ENCODE measurements at regions of chr4 and their contacts with region 1.

Region 1: GRCh38 chr4:89226665-89227574 is 80.7 kb downstream of the GPRIN3 start:
- DNase-seq: peak; percentile 75
- H3K4me3 Mint-ChIP-seq: no peak overlapping the region
- H3K27ac Mint-ChIP-seq: no peak overlapping the region
- H3K4me1 Mint-ChIP-seq: peaks cover 21% of the 10 kb centered on the region
- H3K27me3 Mint-ChIP-seq: no peaks in the 10 kb centered on the region
- CTCF ChIP-seq: peak; percentile 63

Region 2: DNA sequence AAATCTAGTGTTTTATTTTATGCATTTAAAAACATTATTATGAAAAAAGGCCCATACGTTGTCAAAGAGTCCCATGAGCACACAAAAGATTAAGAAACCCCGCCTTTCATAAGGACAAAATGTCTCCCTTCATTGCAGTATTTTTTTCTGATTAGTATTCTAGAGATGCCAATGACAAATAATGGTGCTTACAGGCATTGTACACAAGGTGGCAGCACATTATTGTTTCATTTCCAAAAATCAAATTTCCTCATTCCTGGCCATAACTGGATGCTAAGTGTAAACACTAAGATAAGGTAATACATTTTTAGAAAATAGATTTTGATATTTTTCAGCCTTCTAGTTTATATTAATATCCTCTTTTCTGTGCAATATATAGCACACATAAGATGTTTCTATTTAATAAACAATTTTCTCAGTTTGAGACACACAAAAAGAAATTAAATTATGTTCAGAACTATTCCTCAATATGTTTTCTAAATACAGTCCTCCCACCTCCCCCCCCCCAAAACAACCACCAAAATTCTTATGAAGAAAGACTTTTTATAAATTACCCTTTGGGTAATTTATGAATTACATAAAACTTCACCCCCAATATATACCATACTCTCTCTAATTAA is 67.9 kb before region 1 on chr4:
- CTCF ChIA-PET with region 1: no interaction called
- intact Hi-C with region 1: loop called (anchors 2 kb)
- DNase-seq: peak; percentile 20
- H3K4me3 Mint-ChIP-seq: no peak overlapping the region
- H3K27ac Mint-ChIP-seq: no peak overlapping the region
- H3K4me1 Mint-ChIP-seq: no peaks in the 10 kb centered on the region
- H3K27me3 Mint-ChIP-seq: no peaks in the 10 kb centered on the region
- CTCF ChIP-seq: peak; percentile 16

Measured in Calu3 (cell line).